ENCODE measurements at regions of chr1 and their contacts with region 1.

Region 1: DNA sequence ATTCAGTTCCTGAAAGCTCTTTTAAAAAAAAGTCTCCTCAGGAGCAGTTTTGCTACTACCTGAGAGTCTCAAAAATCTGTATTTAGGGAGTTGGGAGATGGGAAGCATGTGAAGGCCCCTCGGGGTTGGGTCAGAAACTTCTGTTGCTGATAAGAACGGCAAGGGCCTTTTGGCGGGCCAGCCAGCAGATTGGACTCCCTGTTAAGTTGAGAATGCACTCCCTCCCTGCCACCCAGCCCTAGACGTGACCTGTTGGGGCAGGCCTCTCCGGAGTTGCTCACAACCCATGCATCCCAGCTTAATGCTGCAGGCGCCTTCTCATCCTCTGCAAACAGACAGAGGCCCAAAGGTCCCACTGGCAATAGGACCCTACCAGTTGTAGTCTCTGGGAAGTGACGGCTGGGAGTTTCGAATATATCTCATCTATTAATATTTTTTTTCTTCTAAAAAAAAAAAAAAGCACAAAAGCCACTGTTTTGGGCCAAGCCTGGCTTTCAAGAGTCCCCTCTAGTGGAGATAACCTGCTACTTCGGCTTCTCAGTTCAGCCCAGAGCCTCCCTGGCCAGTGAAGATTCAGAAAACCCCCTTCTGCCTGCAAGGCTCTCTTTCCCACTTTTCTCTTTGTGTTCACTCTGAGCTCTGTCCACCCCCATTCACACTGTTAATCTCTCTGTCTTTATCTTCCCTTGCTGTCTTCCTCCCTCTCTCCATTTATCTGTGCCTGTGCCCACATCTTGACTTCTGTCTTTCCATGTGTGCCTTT is 5.3 kb downstream of the PLXNA2 start:
- DNase-seq: peak; percentile 50 to 53
- H3K4me3 ChIP-seq: no peak overlapping the region
- H3K4me3 Mint-ChIP-seq: no peak overlapping the region
- H3K27ac Mint-ChIP-seq: no peak overlapping the region
- H3K4me1 ChIP-seq: peaks cover 34% of the 10 kb centered on the region
- H3K4me1 Mint-ChIP-seq: peaks cover 13% of the 10 kb centered on the region
- H3K27me3 ChIP-seq: 0 out of 2 replicates have a peak, but pooled peaks cover 1% of the 10 kb centered on the region
- H3K27me3 Mint-ChIP-seq: peaks cover 6% of the 10 kb centered on the region
- CTCF ChIP-seq: peak; percentile 83 to 86

Region 2: GRCh38 chr1:208107425-208108212 is 131.3 kb before region 1 on chr1:
- CTCF ChIA-PET with region 1: no interaction called
- POLR2A ChIA-PET with region 1: no interaction called
- intact Hi-C with region 1: no loop called
- DNase-seq: no peak
- H3K4me3 ChIP-seq: no peak overlapping the region
- H3K4me3 Mint-ChIP-seq: no peak overlapping the region
- H3K27ac Mint-ChIP-seq: no peak overlapping the region
- H3K4me1 ChIP-seq: peaks cover 23% of the 10 kb centered on the region
- H3K4me1 Mint-ChIP-seq: peaks cover 13% of the 10 kb centered on the region
- H3K27me3 ChIP-seq: no peaks in the 10 kb centered on the region
- H3K27me3 Mint-ChIP-seq: no peaks in the 10 kb centered on the region
- CTCF ChIP-seq: no peak

Region 3: DNA sequence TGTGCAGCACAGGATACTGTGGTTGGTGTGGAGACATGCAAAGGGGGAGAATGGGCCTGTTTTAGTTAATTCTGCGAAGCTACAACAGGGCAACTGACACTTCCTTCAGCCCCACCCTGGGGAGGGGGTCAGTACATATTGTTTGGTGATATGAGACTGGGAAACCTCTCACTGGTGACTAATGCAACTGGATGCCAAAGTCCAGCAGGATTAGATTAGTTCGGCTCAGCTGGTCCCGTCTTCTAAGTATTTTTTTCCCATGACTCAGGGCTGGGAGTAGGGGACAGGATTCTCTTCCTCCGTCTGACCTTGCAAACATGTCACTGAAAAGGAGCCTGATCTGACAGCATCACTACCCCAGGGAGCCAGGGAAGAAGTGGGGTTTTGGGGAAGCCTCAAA is 37.7 kb before region 1 on chr1:
- CTCF ChIA-PET with region 1: interaction called, 3 read pairs
- POLR2A ChIA-PET with region 1: no interaction called
- intact Hi-C with region 1: loop called (anchors 2 kb)
- DNase-seq: peak; percentile 73 to 81
- H3K4me3 ChIP-seq: no peak overlapping the region
- H3K4me3 Mint-ChIP-seq: peak overlapping the region; percentile 13
- H3K27ac Mint-ChIP-seq: peak overlapping the region; percentile 82
- H3K4me1 ChIP-seq: peaks cover 35% of the 10 kb centered on the region
- H3K4me1 Mint-ChIP-seq: peaks cover 22% of the 10 kb centered on the region
- H3K27me3 ChIP-seq: no peaks in the 10 kb centered on the region
- H3K27me3 Mint-ChIP-seq: no peaks in the 10 kb centered on the region
- CTCF ChIP-seq: no peak